Cardiac septum (tissue), 1 donor: ENCODE measurements at regions of chr2 and their contacts with region 1.

Region 1: GRCh38 chr2:226791487-226792081 is 8.0 kb downstream of the IRS1 start:
- DNase-seq: peak; percentile 96

Region 2: GRCh38 chr2:226048611-226049010 is 743.0 kb before region 1 on chr2:
- intact Hi-C with region 1: no loop called
- DNase-seq: no peak

Region 3: DNA sequence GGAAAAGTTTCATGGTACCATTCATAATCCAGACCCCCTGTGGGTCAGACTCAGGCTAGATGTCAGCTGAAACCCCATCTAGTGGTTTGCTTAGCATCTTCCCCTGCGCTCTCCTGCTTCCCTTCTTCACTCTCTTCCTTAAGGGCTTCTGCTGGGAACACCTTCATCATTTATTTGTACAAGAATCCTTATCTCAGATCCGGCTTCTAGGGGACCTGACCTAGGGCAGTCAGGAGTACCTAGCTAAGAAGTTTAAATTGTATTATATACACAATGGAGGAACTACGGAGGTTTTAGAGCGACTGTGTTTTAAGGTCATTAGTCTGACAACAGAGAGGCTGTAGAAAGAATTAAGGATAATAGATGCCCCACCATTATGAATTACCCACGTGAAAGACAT is 503.7 kb before region 1 on chr2:
- intact Hi-C with region 1: no loop called
- DNase-seq: no peak

Region 4: DNA sequence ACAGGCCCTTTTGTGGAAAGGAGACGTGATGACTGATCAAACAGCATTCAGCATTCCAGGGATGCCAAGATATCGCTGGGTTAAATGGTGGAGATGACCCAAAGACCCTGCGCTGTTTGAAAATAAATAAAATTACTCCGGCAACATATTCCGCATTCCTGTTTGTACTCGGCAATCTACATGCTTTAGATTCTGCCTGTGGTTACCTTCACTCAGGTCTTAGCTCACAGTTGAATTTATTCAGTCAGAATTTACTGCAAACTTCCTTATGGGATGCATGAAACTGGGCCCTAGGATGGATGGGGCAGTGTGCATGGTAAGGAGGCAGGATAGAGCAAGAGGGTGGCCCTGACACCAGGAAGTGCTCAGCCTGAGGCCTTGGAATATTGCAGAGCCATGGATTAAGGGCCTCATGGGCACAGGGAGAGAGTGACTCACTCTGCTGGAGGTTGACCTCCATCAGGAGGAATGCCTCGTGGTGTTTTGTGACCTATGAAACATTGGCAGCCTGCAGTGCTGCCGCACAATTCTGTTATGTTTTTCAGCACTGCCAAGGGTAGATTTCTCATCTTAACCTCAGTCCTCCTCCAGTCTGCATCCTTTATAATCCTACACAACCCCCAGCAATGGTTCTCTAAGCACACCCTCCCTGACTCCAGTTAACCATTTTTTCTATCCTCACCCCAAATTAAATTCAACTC is 313.3 kb before region 1 on chr2:
- intact Hi-C with region 1: loop called (anchors 10 kb)
- DNase-seq: no peak

Region 5: GRCh38 chr2:226554701-226555100 is 236.9 kb before region 1 on chr2:
- intact Hi-C with region 1: loop called (anchors 10 kb)
- DNase-seq: no peak

Region 6: GRCh38 chr2:226649871-226650660 is 141.5 kb before region 1 on chr2:
- intact Hi-C with region 1: loop called (anchors 5 kb)
- DNase-seq: peak; percentile 80

Region 7: DNA sequence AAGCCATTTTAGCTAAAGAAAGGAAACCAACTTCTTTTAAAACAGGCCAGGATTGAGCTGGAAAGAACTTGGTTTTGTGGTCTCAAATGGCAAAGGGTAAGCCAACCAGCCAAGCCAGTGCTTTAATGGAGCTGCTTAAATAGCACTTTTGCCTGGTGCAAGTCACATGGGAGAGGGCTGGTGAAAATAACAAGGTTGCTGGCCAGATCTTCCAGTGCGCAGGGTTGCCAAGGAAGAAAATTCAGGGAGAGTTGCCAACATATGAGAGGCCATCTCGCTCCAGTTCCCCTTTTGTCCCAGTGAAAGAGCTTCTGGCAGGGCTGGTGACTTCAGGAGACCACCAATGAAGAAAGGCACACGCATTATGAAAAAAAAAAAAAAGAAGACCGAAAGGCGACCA is 49.2 kb before region 1 on chr2:
- intact Hi-C with region 1: loop called (anchors 5 kb)
- DNase-seq: no peak

Region 8: DNA sequence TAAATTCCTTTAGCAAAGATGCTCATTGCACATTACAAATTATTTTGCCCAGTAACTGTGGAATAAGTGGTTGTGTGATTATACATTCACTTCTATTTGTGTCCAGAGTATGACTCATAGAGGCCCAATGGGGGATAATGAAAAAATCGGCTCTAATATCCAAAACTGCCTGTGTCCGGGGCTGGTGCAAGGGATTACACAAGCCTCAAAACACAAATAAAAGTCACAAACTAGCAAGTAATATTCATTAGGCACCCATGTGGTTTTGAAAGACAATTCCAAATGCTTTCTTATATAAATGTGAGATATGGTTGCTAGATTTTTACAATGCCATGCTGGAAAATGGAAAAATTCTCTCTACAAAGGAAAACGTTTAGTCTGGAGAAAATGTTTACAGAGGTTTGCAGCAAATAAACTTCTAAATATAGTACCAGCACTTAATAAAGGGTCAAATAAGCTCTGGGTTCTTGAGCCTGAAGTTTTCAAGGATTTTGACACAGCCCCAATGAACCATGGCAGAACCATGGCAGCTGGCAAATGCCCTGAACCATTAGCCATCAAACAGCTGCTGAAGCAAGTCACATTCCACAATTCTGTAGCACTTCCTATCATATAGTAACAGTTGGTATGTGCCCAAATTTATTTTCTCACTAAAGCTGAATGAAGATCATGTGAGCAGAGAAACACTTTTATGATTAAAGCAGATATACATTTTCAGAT is 32.5 kb before region 1 on chr2:
- intact Hi-C with region 1: loop called (anchors 5 kb)
- DNase-seq: no peak

Region 9: DNA sequence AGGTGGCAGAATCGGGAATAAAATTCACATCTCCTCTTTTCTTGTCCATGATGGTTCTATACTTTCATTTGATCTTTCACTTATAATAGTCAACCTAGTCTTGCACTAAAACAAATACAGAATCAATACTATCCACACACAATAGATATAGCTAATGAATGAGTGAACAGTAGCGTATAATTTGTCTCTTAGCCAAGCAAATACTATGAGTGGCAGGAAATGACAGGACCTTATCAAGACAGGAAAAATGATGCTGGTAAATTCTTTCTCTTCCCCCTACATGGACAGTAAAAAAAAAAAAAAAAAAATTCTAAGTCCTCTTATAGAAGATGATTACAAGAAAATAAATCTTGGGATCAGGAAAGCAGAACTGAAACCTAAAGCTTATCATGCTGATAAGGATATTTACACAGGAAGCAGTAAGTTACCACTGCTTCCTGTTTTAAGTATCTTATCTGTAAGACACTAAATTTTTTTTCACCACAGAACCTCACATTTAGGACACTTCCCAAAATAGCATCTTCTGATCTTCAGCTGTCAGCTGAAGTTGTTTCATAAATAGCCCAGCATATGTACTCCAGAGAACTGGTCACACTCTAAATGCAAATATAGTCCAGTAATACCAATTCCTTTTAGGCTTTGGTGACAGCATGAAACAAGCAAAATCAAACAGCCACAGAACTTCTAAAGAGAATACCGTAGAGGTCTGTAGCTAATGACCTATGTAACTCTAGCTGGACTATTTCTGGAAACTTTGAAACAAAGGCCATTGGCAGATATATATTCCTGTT is 19.0 kb before region 1 on chr2:
- intact Hi-C with region 1: loop called (anchors 2 kb)
- DNase-seq: no peak